Right cardiac atrium (tissue), 5 donors: ENCODE measurements at regions of chr1 and their contacts with region 1.

Region 1: GRCh38 chr1:192639607-192640368 is 3.8 kb downstream of the RGS13 start:
- DNase-seq: no peak
- ATAC-seq: no peak
- H3K4me3 ChIP-seq: no peak overlapping the region
- H3K27ac ChIP-seq: no peak overlapping the region
- H3K4me1 ChIP-seq: no peaks in the 10 kb centered on the region
- H3K27me3 ChIP-seq: no peaks in the 10 kb centered on the region

Region 2: GRCh38 chr1:192263436-192263835 is 376.4 kb before region 1 on chr1:
- intact Hi-C with region 1: no loop called
- DNase-seq: no peak
- ATAC-seq: no peak
- H3K4me3 ChIP-seq: no peak overlapping the region
- H3K27ac ChIP-seq: no peak overlapping the region
- H3K4me1 ChIP-seq: no peaks in the 10 kb centered on the region
- H3K27me3 ChIP-seq: no peaks in the 10 kb centered on the region

Region 3: DNA sequence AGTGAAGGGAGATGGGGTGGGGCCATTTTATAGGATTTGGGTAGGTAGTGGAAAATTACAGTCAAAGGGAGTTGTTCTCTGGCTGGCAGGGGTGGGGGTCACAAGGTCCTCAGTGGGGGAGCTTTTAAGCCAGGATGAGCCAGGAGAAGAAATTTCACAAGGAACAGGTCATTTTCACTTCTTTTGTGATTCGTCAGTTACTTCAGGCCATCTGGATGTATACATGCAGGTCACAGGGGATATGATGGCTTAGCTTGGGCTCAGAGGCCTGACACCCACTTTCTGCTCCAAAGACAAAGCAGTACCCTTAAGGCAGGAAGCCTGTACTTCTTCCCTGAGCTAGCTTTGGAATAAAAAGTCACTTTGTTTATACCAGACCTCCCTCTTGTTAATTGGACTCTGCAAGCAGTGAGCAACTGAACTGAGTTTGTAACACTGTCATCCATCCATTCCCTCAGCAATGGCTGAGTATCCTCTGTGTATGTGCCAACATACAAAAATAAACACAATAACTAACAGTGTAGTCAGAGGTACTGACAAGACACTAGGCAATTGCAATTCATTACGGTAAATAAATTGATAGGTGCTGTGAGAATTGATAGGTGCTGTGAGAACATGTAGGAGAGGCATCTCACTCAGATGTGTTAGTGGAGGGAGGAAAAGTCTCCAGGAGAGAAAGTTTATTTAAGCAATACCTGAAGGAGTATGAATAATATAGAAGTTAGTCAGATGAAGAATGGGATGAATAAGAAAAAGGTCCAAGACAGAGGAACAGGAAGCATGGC is 154.4 kb after region 1 on chr1:
- intact Hi-C with region 1: loop called in 1 of 4 experiments (anchors 10 kb)
- DNase-seq: no peak
- ATAC-seq: no peak
- H3K4me3 ChIP-seq: no peak overlapping the region
- H3K27ac ChIP-seq: no peak overlapping the region
- H3K4me1 ChIP-seq: no peaks in the 10 kb centered on the region
- H3K27me3 ChIP-seq: no peaks in the 10 kb centered on the region

Region 4: DNA sequence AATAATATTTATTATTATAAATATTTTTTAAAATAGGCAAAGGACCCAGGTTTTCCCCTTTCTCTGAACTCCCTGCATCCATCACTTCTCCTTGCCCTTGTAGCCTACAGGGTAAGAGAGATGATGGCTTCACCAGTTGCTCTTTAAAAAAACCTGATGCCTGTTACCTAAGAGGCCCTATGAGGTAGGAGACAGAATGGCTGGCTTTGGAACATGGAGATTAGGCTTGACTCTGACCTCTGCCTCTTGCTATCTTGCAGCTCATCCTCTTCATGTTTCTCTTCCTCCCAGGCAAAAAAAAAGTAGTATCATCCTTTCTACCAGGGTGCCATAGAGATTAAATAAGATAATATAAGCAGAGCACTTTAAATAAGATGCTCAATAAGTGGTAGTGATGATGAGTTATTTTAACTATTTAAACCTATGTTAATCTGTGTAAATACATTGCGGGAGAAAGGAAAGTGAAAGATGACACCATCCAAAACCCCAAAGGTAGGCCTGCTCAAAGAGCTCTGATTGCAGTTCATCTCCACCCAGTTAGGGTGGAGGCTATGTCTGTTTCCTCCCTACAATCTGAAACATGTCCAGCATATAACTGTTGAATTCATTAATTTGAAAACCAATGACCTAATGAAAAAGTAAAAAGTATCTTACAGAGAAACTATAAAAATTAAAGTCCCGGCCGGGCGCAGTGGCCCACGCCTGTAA is 220.8 kb after region 1 on chr1:
- intact Hi-C with region 1: no loop called
- DNase-seq: no peak
- ATAC-seq: no peak
- H3K4me3 ChIP-seq: no peak overlapping the region
- H3K27ac ChIP-seq: no peak overlapping the region
- H3K4me1 ChIP-seq: no peaks in the 10 kb centered on the region
- H3K27me3 ChIP-seq: no peaks in the 10 kb centered on the region